ENCODE measurements at regions of chr7 and their contacts with region 1.

Region 1: DNA sequence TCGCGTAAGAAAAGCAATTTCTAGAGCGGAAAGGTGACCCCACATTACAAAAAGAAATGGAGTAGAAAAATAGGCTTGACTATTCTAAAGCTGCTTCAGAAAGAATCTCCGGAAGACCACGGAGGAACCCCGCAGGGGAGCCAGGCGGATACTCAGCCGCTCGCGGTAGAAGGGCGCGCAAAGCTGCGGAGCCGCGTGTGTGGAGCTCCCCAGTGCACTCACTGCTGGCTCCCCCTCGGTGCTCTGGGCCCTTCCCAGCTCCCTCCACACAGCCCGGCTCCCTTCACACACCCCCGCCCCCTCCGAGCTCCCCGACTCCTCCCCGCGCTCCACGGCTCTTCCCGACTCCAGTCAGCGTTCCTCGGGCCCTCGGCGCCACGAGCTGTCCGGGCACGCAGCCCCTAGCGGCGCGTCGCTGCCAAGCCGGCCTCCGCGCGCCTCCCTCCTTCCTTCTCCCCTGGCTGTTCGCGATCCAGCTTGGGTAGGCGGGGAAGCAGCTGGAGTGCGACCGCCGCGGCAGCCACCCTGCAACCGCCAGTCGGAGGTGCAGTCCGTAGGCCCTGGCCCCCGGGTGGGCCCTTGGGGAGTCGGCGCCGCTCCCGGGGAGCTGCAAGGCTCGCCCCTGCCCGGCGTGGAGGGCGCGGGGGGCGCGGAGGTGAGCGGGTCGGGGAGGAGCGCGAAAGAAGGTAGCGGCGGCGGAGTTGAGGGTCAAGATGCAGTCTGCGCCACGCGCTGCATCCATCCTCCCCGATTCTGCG is at the start of gene STEAP2:
- DNase-seq: peak; percentile 99
- H3K4me3 ChIP-seq: peak within 1 kb of the TSS; percentile 88
- H3K27ac ChIP-seq: peak within 1 kb of the TSS; percentile 98
- H3K4me1 ChIP-seq: peaks cover 38% of the 10 kb centered on the region
- H3K27me3 ChIP-seq: no peaks in the 10 kb centered on the region
- CTCF ChIP-seq: peak; percentile 82
- total RNA-seq, gene STEAP2: 114 and 134 TPM in 2 replicates

Region 2: GRCh38 chr7:89914711-89915110 is 296.9 kb before region 1 on chr7:
- CTCF ChIA-PET with region 1: no interaction called
- POLR2A ChIA-PET with region 1: no interaction called
- intact Hi-C with region 1: no loop called
- DNase-seq: no peak
- H3K4me3 ChIP-seq: no peak overlapping the region
- H3K27ac ChIP-seq: no peak overlapping the region
- H3K4me1 ChIP-seq: no peaks in the 10 kb centered on the region
- H3K27me3 ChIP-seq: no peaks in the 10 kb centered on the region
- CTCF ChIP-seq: no peak

Region 3: DNA sequence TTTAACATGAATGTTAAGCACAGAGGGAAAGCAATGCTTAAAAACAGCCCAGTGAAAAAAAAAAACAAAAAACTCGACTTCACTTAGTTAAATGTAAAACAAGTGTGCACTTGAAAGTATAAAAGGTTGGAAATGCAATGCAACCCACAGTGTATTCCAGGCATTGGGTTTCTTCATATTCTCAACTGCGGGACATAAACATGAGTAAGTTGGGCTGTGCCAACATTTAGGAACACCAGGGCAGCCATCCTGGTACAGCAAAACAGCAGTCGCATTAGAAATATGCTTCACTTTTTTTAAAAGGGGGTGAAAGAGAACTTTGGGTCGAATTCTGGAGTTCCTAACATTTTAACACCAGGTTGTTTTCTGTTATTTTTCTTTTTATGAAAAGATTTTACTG is 56.4 kb before region 1 on chr7:
- CTCF ChIA-PET with region 1: interaction called, 12 read pairs
- POLR2A ChIA-PET with region 1: interaction called, 5 read pairs
- intact Hi-C with region 1: loop called (anchors 2 kb)
- DNase-seq: peak; percentile 28
- H3K4me3 ChIP-seq: peak overlapping the region; percentile 90
- H3K27ac ChIP-seq: peak overlapping the region; percentile 98
- H3K4me1 ChIP-seq: peaks cover 8% of the 10 kb centered on the region
- H3K27me3 ChIP-seq: no peaks in the 10 kb centered on the region
- CTCF ChIP-seq: no peak

Region 4: GRCh38 chr7:90262438-90262837 is 50.9 kb after region 1 on chr7:
- CTCF ChIA-PET with region 1: no interaction called
- POLR2A ChIA-PET with region 1: no interaction called
- intact Hi-C with region 1: loop called (anchors 5 kb)
- DNase-seq: peak; percentile 65
- H3K4me3 ChIP-seq: no peak overlapping the region
- H3K27ac ChIP-seq: peak overlapping the region; percentile 2
- H3K4me1 ChIP-seq: peaks cover 33% of the 10 kb centered on the region
- H3K27me3 ChIP-seq: no peaks in the 10 kb centered on the region
- CTCF ChIP-seq: peak; percentile 64

Region 5: GRCh38 chr7:90424720-90425119 is 213.2 kb after region 1 on chr7:
- CTCF ChIA-PET with region 1: interaction called, 5 read pairs
- POLR2A ChIA-PET with region 1: no interaction called
- intact Hi-C with region 1: loop called (anchors 5 kb)
- DNase-seq: no peak
- H3K4me3 ChIP-seq: no peak overlapping the region
- H3K27ac ChIP-seq: no peak overlapping the region
- H3K4me1 ChIP-seq: peaks cover 9% of the 10 kb centered on the region
- H3K27me3 ChIP-seq: no peaks in the 10 kb centered on the region
- CTCF ChIP-seq: no peak

Region 6: GRCh38 chr7:90621125-90621746 is 409.7 kb after region 1 on chr7:
- CTCF ChIA-PET with region 1: no interaction called
- POLR2A ChIA-PET with region 1: no interaction called
- intact Hi-C with region 1: loop called (anchors 1 kb)
- DNase-seq: peak; percentile 93
- H3K4me3 ChIP-seq: no peak overlapping the region
- H3K27ac ChIP-seq: peak overlapping the region; percentile 97
- H3K4me1 ChIP-seq: peaks cover 97% of the 10 kb centered on the region
- H3K27me3 ChIP-seq: no peaks in the 10 kb centered on the region
- CTCF ChIP-seq: no peak

Region 7: GRCh38 chr7:91089382-91089963 is 877.9 kb after region 1 on chr7:
- CTCF ChIA-PET with region 1: no interaction called
- POLR2A ChIA-PET with region 1: interaction called, 26 read pairs
- intact Hi-C with region 1: no loop called
- DNase-seq: peak; percentile 85
- H3K4me3 ChIP-seq: no peak overlapping the region
- H3K27ac ChIP-seq: peak overlapping the region; percentile 89
- H3K4me1 ChIP-seq: peaks cover 83% of the 10 kb centered on the region
- H3K27me3 ChIP-seq: no peaks in the 10 kb centered on the region
- CTCF ChIP-seq: peak; percentile 91

Measured in A673 (cell line).